BJ (cell line): ENCODE measurements at regions of chr10 and their contacts with region 1.

Region 1: DNA sequence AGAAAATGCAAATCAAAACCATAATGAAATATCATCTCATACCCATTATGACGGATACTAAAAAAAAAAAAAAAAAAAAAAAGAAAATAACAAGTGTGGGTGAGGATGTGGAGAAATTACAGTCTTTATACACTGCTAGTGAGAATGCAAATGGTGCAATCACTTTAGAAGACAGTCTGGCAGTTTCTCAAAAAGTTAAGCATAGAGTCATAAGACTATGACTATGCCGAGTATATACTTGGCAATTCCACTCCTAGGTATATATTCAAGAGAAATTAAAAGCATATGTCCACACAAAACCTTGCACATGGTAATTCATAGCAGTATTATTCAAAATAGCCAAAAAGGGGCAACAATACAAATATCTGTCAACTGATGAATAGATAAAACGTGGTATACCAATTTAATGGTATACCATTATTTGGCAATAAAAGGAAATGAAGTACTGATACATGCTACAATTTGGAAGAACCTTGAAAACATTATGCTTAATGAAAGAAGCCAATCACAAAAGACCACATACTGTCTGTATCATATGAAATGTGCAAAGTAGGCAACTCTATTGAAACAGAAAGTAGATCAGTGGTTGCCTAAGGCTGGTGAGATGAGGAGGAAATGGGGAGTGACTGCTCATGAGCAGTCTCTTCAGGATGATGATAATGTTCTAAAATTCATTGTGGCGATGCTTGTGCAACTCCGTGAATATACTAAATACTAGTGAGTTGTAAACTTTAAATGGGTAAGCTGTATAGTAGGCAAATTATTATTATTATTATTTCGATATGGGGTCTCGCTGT is 90.1 kb upstream of the NANOS1 start:
- DNase-seq: no peak
- H3K4me3 ChIP-seq: no peak overlapping the region
- H3K27me3 ChIP-seq: no peaks in the 10 kb centered on the region
- CTCF ChIP-seq: no peak

Region 2: DNA sequence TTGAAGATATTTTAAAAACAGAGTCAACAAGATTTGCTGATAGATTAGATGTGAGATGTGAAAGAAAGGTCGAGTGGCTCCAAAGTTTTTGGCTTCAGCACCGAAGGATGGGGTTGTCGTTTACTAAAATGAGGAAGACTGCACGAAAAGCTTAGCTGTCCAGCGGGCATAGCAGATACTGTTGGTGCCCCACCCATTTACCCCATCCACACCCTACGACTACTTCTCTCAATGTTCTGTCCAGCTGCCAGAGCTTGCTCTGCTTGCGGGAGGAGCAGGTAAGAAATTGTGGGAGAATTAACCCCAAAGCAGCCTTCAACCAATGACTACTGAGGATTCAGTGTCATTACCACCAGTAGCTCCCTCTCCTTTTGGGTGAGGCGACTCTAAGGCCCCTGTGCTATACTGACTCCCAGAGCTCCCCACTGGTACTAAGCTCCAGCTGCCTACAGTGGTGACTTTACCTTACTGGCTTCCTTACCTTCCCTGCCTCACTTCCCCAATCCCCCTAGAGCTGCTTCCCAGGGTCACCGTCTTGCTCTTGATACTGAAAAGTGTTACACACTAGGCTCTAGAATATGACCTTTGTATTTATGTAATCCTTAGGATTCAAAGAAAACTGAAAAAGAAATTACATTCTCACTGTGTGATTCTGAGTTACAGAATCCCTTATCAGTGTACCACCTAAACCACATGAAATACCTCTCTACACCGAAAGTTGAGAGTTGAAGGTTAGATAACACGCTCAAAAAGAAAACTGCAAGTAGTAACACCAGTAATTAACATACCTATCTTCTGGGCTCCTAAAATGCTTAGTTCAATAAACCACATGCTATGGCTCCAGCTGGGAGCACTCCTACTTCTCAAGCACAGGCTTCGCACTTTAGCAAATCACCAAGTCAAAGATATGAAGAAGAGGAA is 206.9 kb before region 1 on chr10:
- CTCF ChIA-PET with region 1: no interaction called
- POLR2A ChIA-PET with region 1: no interaction called
- DNase-seq: no peak
- H3K4me3 ChIP-seq: no peak overlapping the region
- H3K27me3 ChIP-seq: no peaks in the 10 kb centered on the region
- CTCF ChIP-seq: no peak

Region 3: GRCh38 chr10:118911361-118911760 is 28.0 kb before region 1 on chr10:
- CTCF ChIA-PET with region 1: no interaction called
- POLR2A ChIA-PET with region 1: no interaction called
- DNase-seq: no peak
- H3K4me3 ChIP-seq: no peak overlapping the region
- H3K27me3 ChIP-seq: no peaks in the 10 kb centered on the region
- CTCF ChIP-seq: no peak

Region 4: GRCh38 chr10:118955526-118955925 is 16.1 kb after region 1 on chr10:
- CTCF ChIA-PET with region 1: no interaction called
- POLR2A ChIA-PET with region 1: interaction called, 11 read pairs
- DNase-seq: no peak
- H3K4me3 ChIP-seq: no peak overlapping the region
- H3K27me3 ChIP-seq: no peaks in the 10 kb centered on the region; the same call in 1 of the 2 replicates
- CTCF ChIP-seq: no peak

Region 5: DNA sequence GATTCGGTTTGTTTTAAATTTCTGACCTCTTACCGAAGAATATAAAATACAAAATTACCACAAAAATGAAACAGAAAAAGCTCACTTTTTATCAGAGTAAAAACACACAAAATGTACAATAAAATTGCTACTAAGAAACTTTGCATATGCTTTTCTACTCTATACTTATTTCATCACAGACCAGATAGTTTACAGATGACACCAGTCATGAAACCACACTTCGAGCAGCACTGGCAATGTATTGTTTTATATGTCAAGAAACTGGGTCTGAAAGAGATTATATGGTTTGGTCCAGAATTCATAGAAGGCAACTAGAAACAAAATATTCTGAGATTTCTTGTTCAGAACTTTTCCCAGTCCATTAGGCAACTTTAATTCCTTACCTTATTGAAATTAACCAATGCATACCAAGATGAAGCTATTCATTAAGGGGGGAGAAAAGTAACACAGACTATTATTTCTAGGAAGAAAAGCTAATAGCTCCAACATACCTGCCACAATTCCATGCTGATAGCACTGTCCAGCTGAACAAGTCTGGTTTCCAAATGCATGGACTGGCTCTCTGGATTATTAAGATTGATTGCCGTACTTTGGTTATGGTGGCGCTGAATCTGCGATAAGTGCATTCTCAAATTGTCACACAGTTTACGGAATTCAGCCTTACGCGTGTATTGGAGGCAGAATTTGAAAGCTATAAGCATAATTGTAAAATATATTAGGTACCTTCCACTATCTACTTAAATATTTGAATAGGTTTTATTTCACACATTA is 131.2 kb after region 1 on chr10:
- CTCF ChIA-PET with region 1: no interaction called
- POLR2A ChIA-PET with region 1: no interaction called
- DNase-seq: no peak
- H3K4me3 ChIP-seq: no peak overlapping the region
- H3K27me3 ChIP-seq: no peaks in the 10 kb centered on the region
- CTCF ChIP-seq: no peak